Activated CD4-positive, alpha-beta T cell treated with anti-CD3 and anti-CD28 coated beads, Interleukin-2, amount 10 ng/mL, durations not matched to agents 24 days and 14 days (primary cell): ENCODE measurements at regions of chr6 and their contacts with region 1.

Region 1: GRCh38 chr6:27838058-27838944 is 73.9 kb downstream of the OR2B2 start:
- DNase-seq: peak; percentile 96
- H3K4me3 Mint-ChIP-seq: no peak overlapping the region
- H3K27ac Mint-ChIP-seq: no peak overlapping the region
- H3K4me1 Mint-ChIP-seq: peaks cover 28% of the 10 kb centered on the region
- H3K27me3 Mint-ChIP-seq: no peaks in the 10 kb centered on the region

Region 2: GRCh38 chr6:27795697-27796494 is 42.4 kb before region 1 on chr6:
- intact Hi-C with region 1: no loop called
- DNase-seq: peak; percentile 93
- H3K4me3 Mint-ChIP-seq: peak overlapping the region; percentile 3
- H3K27ac Mint-ChIP-seq: peak overlapping the region; percentile 54
- H3K4me1 Mint-ChIP-seq: peaks cover 37% of the 10 kb centered on the region
- H3K27me3 Mint-ChIP-seq: peaks cover 20% of the 10 kb centered on the region

Region 3: DNA sequence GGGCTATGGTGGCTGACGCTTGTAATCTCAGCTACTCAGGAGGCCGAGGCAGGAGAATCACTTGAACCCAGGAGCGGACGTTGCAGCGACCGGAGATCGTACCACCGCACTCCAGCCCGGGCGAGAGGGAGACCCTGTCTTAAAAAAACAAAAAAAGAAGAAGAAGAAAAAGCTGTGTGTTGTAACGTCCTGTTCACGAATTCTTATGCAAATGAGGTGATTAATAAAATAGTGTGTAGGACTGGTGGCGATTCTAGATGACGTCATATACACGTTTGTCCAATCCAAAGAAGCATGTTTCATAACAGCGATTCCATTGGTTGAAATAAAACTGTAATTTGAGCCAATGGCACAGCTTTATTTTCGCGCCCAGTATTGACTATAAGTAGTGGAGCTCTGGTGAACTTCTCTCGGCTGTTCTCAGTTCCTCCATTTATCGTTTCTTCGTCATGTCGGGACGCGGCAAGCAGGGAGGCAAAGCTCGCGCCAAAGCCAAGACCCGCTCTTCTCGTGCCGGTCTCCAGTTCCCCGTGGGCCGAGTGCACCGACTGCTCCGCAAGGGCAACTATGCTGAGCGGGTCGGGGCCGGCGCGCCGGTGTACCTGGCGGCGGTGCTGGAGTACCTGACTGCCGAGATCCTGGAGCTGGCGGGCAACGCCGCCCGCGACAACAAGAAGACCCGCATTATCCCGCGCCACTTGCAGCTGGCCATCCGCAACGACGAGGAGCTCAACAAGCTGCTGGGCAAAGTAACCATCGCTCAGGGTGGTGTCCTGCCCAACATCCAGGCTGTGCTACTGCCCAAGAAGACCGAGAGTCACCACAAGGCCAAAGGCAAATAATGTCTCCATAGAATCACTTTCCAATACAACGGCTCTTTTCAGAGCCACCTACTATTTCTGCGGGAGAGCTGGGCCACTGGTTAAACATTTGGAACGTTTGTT is 26.9 kb after region 1 on chr6:
- intact Hi-C with region 1: loop called (anchors 1 kb)
- DNase-seq: peak; percentile 95
- H3K4me3 Mint-ChIP-seq: peak overlapping the region; percentile 97
- H3K27ac Mint-ChIP-seq: peak overlapping the region; percentile 100
- H3K4me1 Mint-ChIP-seq: peaks cover 58% of the 10 kb centered on the region
- H3K27me3 Mint-ChIP-seq: peaks cover 2% of the 10 kb centered on the region

Region 4: DNA sequence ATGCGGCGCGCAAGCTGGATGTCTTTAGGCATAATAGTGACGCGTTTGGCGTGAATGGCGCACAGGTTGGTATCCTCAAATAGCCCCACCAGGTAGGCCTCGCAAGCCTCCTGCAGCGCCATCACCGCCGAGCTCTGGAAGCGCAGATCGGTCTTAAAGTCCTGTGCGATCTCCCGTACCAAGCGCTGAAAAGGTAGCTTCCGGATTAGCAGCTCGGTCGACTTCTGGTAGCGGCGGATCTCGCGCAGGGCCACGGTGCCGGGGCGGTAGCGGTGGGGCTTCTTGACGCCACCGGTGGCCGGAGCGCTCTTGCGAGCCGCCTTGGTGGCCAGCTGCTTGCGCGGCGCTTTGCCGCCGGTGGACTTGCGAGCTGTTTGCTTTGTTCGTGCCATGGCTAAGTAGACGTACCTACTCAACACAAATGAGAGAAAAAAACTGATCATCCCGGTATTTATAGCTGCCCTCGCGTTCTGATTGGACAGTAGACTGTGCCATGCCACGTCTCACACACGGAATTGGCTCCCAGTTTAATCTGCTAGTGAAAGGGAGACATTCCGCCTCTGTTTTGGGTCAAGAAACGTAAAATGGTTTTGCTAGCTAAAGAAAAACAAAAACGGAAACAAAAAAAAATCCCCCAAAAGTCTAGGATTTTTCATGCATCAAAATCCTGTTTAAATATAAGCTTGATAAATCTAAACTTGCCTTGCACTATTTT is 33.8 kb after region 1 on chr6:
- intact Hi-C with region 1: loop called (anchors 1 kb)
- DNase-seq: peak; percentile 97
- H3K4me3 Mint-ChIP-seq: peak overlapping the region; percentile 92
- H3K27ac Mint-ChIP-seq: peak overlapping the region; percentile 96
- H3K4me1 Mint-ChIP-seq: peaks cover 56% of the 10 kb centered on the region
- H3K27me3 Mint-ChIP-seq: peaks cover 2% of the 10 kb centered on the region